Tibial artery (tissue), 4 donors: ENCODE measurements at regions of chr17 and their contacts with region 1.

Region 1: GRCh38 chr17:10605221-10605783 is 51.8 kb downstream of the MYH3 start:
- DNase-seq: no peak
- H3K4me3 ChIP-seq: no peak overlapping the region
- H3K27ac ChIP-seq: no peak overlapping the region
- H3K4me1 ChIP-seq: no peaks in the 10 kb centered on the region
- H3K27me3 ChIP-seq: peaks cover 0 to 8% of the 10 kb centered on the region in 2 donors
- CTCF ChIP-seq: no peak

Region 2: GRCh38 chr17:9924735-9925191 is 680.5 kb before region 1 on chr17:
- intact Hi-C with region 1: loop called (anchors 5 kb)
- DNase-seq: no peak
- H3K4me3 ChIP-seq: no peak overlapping the region
- H3K27ac ChIP-seq: no peak overlapping the region
- H3K4me1 ChIP-seq: no peaks in the 10 kb centered on the region
- H3K27me3 ChIP-seq: peaks cover 0 to 2% of the 10 kb centered on the region in 2 donors
- CTCF ChIP-seq: peak; percentile 85 to 89

Region 3: DNA sequence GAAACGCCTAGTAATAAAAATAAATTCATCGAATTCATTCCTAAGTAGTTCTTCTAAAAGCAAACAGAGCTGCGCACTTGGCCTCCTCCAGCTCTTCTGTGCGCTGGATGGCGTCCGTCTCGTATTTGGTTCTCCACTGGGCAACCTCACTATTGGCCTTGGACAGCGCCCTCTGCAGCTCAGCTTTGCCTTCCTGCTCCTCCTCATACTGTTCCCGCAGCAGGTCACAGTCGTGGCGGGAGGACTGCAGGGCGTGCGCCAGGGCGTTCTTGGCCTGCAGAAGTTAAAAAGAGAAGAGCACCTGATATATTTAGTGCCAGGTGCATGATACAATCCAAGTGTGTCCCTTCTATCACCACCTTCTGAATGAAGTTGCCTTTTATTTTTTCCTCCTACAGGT is 30.0 kb after region 1 on chr17:
- intact Hi-C with region 1: no loop called
- DNase-seq: no peak
- H3K4me3 ChIP-seq: no peak overlapping the region
- H3K27ac ChIP-seq: no peak overlapping the region
- H3K4me1 ChIP-seq: no peaks in the 10 kb centered on the region
- H3K27me3 ChIP-seq: no peaks in the 10 kb centered on the region
- CTCF ChIP-seq: no peak